HEK293 (cell line): ENCODE measurements at regions of chr3 and their contacts with region 1.

Region 1: DNA sequence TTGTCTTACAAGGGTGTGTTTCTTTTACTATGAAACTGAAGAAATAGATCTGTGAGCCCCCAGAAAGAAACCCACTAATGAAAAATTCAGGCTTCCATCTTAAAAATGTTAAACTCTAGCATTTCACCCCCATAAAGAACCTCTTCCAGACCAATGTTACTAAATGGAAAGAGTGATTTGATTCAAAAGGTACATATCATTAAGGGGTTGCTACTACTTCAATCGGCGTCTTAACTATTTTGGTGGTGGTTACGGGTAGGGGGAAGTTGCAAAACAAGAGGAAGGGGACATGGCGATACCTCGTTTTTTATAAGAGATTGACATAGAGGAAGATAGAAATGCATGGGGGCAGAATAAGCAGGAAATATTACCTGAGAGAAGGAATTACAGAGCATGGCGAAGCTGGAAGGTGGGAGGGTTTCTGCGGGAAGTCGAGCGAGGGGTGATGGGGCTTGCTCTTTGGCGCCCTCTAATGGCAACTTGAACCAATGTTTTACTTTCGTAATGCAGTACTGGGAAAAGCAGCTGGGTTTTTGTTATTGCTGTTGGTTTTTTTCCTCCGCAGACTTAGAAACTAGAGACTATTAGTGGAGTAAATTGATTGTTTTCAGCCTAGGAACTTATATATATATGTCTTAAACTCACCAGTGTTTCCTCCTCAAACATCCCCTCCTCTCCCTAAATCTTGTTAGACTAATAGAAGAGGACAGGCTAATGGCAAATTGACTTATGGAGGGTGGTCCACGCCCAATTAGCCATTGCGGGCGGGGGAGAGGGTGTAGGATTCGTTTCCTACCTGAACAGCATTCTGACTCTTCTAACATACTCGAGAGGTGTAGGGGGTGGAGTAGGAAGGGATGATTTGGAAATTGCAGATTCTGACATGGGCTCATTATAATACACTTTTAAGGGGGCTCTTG is 11.3 kb upstream of the SOX2 start:
- H3K4me3 ChIP-seq: 0 out of 2 replicates have a peak overlapping the region, but pooled peaks have one; percentile 6
- H3K27ac ChIP-seq: no peak overlapping the region
- H3K4me1 ChIP-seq: no peaks in the 10 kb centered on the region; the same call in 1 of the 2 replicates
- CTCF ChIP-seq: peak; percentile 64

Region 2: GRCh38 chr3:181210275-181210674 is 490.2 kb before region 1 on chr3:
- CTCF ChIA-PET with region 1: interaction called, 24 read pairs
- POLR2A ChIA-PET with region 1: no interaction called
- H3K4me3 ChIP-seq: no peak overlapping the region
- H3K27ac ChIP-seq: no peak overlapping the region
- H3K4me1 ChIP-seq: no peaks in the 10 kb centered on the region
- CTCF ChIP-seq: no peak

Region 3: GRCh38 chr3:181326637-181327223 is 373.7 kb before region 1 on chr3:
- CTCF ChIA-PET with region 1: interaction called, 31 read pairs
- POLR2A ChIA-PET with region 1: no interaction called
- H3K4me3 ChIP-seq: no peak overlapping the region
- H3K27ac ChIP-seq: no peak overlapping the region
- H3K4me1 ChIP-seq: peaks cover 24% of the 10 kb centered on the region
- CTCF ChIP-seq: no peak

Region 4: DNA sequence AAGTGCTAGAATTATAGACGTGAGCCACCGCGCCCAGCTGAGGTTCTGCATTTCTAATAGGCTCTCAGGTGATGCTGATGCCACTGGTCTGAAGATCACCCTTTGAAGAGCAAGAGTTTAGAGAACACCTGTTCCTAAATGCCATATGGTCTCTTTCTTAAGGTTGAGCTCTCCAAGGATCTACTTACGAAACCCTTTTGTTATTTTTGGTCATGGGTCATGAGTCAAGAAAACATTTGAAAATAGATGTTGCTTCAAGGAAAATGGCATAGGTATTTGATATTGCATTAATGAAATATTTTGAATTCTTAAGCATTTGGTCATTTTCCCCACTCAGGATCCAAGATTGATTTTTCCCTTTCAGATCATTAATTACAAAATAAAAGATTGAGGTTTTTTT is 63.4 kb before region 1 on chr3:
- CTCF ChIA-PET with region 1: no interaction called
- POLR2A ChIA-PET with region 1: no interaction called
- H3K4me3 ChIP-seq: no peak overlapping the region
- H3K27ac ChIP-seq: no peak overlapping the region
- H3K4me1 ChIP-seq: no peaks in the 10 kb centered on the region
- CTCF ChIP-seq: no peak